T-cell (primary cell): ENCODE measurements at regions of chr5 and their contacts with region 1.

Region 1: GRCh38 chr5:56964173-56964572 is 12.2 kb upstream of the MIER3 start:
- DNase-seq: no peak
- ATAC-seq: no peak
- H3K4me3 ChIP-seq: no peak overlapping the region
- H3K4me3 Mint-ChIP-seq: no peak overlapping the region
- H3K27ac ChIP-seq: no peak overlapping the region
- H3K27ac Mint-ChIP-seq: no peak overlapping the region
- H3K4me1 ChIP-seq: no peaks in the 10 kb centered on the region
- H3K4me1 Mint-ChIP-seq: no peaks in the 10 kb centered on the region
- H3K27me3 ChIP-seq: peaks cover 0 to 21% of the 10 kb centered on the region in 2 experiments
- H3K27me3 Mint-ChIP-seq: peaks cover 31 to 46% of the 10 kb centered on the region in 2 donors

Region 2: GRCh38 chr5:55708732-55709131 is 1255.4 kb before region 1 on chr5:
- CTCF ChIA-PET with region 1: no interaction called
- POLR2A ChIA-PET with region 1: interaction called in 1 of 2 experiments, 10 read pairs
- DNase-seq: no peak
- ATAC-seq: no peak
- H3K4me3 ChIP-seq: no peak overlapping the region
- H3K4me3 Mint-ChIP-seq: no peak overlapping the region
- H3K27ac ChIP-seq: no peak overlapping the region
- H3K27ac Mint-ChIP-seq: no peak overlapping the region
- H3K4me1 ChIP-seq: peaks cover 9 to 19% of the 10 kb centered on the region in 2 experiments
- H3K4me1 Mint-ChIP-seq: peaks cover 20 to 38% (median 34%) of the 10 kb centered on the region in 3 donors
- H3K27me3 ChIP-seq: no peaks in the 10 kb centered on the region
- H3K27me3 Mint-ChIP-seq: no peaks in the 10 kb centered on the region

Region 3: GRCh38 chr5:57007344-57007743 is 43.2 kb after region 1 on chr5:
- CTCF ChIA-PET with region 1: no interaction called
- POLR2A ChIA-PET with region 1: no interaction called
- DNase-seq: no peak
- ATAC-seq: no peak
- H3K4me3 ChIP-seq: no peak overlapping the region
- H3K4me3 Mint-ChIP-seq: no peak overlapping the region
- H3K27ac ChIP-seq: no peak overlapping the region
- H3K27ac Mint-ChIP-seq: no peak overlapping the region
- H3K4me1 ChIP-seq: no peaks in the 10 kb centered on the region
- H3K4me1 Mint-ChIP-seq: no peaks in the 10 kb centered on the region
- H3K27me3 ChIP-seq: peaks cover 0 to 3% of the 10 kb centered on the region in 2 experiments
- H3K27me3 Mint-ChIP-seq: no peaks in the 10 kb centered on the region